Activated T-helper 1 cell treated with anti-CD3 and anti-CD28 coated beads, Interleukin-12 subunit alpha, Interleukin-12 subunit beta, Interleukin-2, Interleukin-4 antibody, amounts not matched to agents 30 ng/mL and 10 ng/mL and 1 ng/mL, durations not matched to agents 14 hours and 24 hours and 36 hours (primary cell): ENCODE measurements at regions of chr12 and their contacts with region 1.

Region 1: GRCh38 chr12:57213058-57213715 is 3.4 kb upstream of the NXPH4 start:
- DNase-seq: peak; percentile 74
- H3K4me3 Mint-ChIP-seq: no peak overlapping the region
- H3K27ac Mint-ChIP-seq: no peak overlapping the region
- H3K4me1 Mint-ChIP-seq: peaks cover 30% of the 10 kb centered on the region
- H3K27me3 Mint-ChIP-seq: peaks cover 41% of the 10 kb centered on the region

Region 2: DNA sequence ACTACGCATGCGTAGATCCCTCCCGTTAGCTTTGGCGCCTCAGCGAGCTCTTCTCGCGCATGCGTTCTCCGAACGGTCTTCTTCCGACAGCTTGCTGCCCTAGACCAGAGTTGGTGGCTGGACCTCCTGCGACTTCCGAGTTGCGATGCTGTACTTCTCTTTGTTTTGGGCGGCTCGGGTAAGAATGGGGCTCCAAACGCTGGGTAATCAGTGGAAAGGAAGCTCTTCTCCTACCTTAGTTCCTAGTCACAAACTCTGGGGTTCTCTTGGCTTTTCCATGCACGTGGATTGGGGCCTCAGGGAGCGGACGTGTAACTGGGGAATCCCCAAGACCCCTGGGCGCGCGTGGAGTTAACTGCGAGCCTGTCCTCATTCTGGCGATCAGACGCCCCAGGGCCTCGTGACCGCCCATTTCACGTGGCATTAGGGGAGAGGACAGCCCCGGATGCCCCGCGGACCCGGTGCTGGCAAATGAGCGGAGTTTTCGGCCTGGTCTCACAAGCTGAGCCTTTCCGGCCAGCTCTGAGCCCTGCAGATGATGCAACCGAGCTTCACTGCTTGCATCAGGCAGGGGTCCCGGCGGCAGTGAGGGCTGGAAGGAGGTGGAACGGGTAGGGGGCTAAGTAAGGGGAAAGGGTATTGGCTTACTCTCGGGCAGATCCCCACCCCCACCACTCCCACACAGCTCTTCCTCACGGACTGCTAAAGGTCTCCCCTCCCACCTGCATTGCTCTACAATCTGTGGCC is 16.6 kb after region 1 on chr12 and contains the start of gene SHMT2:
- intact Hi-C with region 1: loop called (anchors 1 kb)
- DNase-seq: peak; percentile 92
- H3K4me3 Mint-ChIP-seq: peak within 1 kb of the TSS; percentile 98
- H3K27ac Mint-ChIP-seq: peak within 1 kb of the TSS; percentile 96
- H3K4me1 Mint-ChIP-seq: peaks cover 64% of the 10 kb centered on the region
- H3K27me3 Mint-ChIP-seq: peaks cover 20% of the 10 kb centered on the region
- total RNA-seq, gene SHMT2: 276 and 280 TPM in 2 replicates

Region 3: GRCh38 chr12:57238854-57239554 is 25.8 kb after region 1 on chr12:
- intact Hi-C with region 1: loop called (anchors 1 kb)
- DNase-seq: peak; percentile 86
- H3K4me3 Mint-ChIP-seq: peak overlapping the region; percentile 95
- H3K27ac Mint-ChIP-seq: peak overlapping the region; percentile 78
- H3K4me1 Mint-ChIP-seq: peaks cover 64% of the 10 kb centered on the region
- H3K27me3 Mint-ChIP-seq: peaks cover 48% of the 10 kb centered on the region